ENCODE measurements at regions of chr11 and their contacts with region 1.

Region 1: GRCh38 chr11:67572747-67573419 is 10.7 kb upstream of the GSTP1 start:
- DNase-seq: no peak
- H3K4me3 ChIP-seq: no peak overlapping the region
- CTCF ChIP-seq: peak; percentile 65

Region 2: GRCh38 chr11:67583247-67584204 is 10.6 kb after region 1 on chr11 and contains the start of gene GSTP1:
- CTCF ChIA-PET with region 1: interaction called, 17 read pairs
- POLR2A ChIA-PET with region 1: no interaction called
- DNase-seq: peak; percentile 33
- H3K4me3 ChIP-seq: peak within 1 kb of the TSS; percentile 79
- CTCF ChIP-seq: peak; percentile 64

Region 3: DNA sequence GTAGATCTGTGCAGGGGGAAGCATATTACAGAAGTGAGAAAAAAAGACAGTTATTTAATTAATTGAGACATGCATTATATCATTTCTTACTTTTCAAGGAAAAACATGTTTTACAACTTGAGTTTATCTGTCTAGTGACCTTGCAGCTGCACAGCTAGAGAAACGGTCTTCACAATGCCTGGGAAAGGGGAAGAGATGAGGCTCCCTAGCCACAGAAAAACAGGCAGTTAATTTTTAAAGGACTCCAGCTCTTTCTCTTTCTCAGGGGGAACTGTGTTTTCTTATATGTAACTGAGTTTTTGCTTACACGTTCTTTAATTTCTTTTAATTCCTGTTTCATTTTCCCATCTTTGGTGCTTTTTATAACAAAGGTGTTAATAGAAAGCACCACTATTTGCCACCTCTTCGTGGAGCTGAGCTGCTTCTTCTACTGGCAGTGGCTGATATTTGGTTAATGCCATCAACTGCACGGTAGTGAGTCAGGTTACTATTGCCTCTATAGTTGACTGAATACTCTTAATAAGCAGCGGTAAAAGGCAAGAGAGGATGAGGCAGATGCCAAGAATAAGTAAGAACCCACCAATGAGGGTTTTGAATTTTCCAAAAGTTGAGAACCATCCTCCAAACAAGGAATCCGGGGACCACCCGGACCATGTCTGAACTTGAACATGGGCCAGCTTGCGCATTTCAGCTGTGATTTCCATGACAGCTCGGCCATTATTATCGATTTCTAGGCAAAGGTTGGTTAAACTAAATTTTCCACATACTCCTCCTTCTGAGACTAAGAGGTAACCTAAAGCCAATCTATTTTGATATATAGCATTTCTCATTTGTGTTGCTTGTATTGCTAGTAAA is 113.0 kb after region 1 on chr11:
- CTCF ChIA-PET with region 1: no interaction called
- POLR2A ChIA-PET with region 1: no interaction called
- DNase-seq: no peak
- H3K4me3 ChIP-seq: no peak overlapping the region
- CTCF ChIP-seq: no peak

Measured in AG04449 (cell line).